Caco-2 (cell line): ENCODE measurements at regions of chr19 and their contacts with region 1.

Region 1: GRCh38 chr19:58305065-58305931 is at the start of gene ERVK3-1:
- DNase-seq: peak; percentile 94 to 95
- H3K4me3 ChIP-seq: peak within 1 kb of the TSS; percentile 68
- H3K4me3 Mint-ChIP-seq: peak within 1 kb of the TSS; percentile 93
- H3K27ac Mint-ChIP-seq: peak within 1 kb of the TSS; percentile 97
- H3K4me1 ChIP-seq: peaks cover 11% of the 10 kb centered on the region
- H3K4me1 Mint-ChIP-seq: peaks cover 8% of the 10 kb centered on the region
- H3K27me3 ChIP-seq: no peaks in the 10 kb centered on the region
- H3K27me3 Mint-ChIP-seq: no peaks in the 10 kb centered on the region
- CTCF ChIP-seq: no peak
- total RNA-seq, gene ERVK3-1: 61.3 and 66.1 TPM in 2 replicates

Region 2: DNA sequence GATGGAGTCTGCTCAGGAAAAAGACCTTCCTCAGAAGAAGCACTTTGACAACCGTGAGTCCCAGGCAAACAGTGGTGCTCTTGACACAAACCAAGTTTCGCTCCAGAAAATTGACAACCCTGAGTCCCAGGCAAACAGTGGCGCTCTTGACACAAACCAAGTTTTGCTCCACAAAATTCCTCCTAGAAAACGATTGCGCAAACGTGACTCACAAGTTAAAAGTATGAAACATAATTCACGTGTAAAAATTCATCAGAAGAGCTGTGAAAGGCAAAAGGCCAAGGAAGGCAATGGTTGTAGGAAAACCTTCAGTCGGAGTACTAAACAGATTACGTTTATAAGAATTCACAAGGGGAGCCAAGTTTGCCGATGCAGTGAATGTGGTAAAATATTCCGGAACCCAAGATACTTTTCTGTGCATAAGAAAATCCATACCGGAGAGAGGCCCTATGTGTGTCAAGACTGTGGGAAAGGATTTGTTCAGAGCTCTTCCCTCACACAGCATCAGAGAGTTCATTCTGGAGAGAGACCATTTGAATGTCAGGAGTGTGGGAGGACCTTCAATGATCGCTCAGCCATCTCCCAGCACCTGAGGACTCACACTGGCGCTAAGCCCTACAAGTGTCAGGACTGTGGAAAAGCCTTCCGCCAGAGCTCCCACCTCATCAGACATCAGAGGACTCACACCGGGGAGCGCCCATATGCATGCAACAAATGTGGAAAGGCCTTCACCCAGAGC is 92.8 kb before region 1 on chr19:
- CTCF ChIA-PET with region 1: no interaction called
- POLR2A ChIA-PET with region 1: no interaction called
- intact Hi-C with region 1: no loop called
- DNase-seq: no peak
- H3K4me3 ChIP-seq: no peak overlapping the region
- H3K4me3 Mint-ChIP-seq: no peak overlapping the region
- H3K27ac Mint-ChIP-seq: no peak overlapping the region
- H3K4me1 ChIP-seq: no peaks in the 10 kb centered on the region
- H3K4me1 Mint-ChIP-seq: no peaks in the 10 kb centered on the region
- H3K27me3 ChIP-seq: no peaks in the 10 kb centered on the region
- H3K27me3 Mint-ChIP-seq: no peaks in the 10 kb centered on the region
- CTCF ChIP-seq: no peak

Region 3: DNA sequence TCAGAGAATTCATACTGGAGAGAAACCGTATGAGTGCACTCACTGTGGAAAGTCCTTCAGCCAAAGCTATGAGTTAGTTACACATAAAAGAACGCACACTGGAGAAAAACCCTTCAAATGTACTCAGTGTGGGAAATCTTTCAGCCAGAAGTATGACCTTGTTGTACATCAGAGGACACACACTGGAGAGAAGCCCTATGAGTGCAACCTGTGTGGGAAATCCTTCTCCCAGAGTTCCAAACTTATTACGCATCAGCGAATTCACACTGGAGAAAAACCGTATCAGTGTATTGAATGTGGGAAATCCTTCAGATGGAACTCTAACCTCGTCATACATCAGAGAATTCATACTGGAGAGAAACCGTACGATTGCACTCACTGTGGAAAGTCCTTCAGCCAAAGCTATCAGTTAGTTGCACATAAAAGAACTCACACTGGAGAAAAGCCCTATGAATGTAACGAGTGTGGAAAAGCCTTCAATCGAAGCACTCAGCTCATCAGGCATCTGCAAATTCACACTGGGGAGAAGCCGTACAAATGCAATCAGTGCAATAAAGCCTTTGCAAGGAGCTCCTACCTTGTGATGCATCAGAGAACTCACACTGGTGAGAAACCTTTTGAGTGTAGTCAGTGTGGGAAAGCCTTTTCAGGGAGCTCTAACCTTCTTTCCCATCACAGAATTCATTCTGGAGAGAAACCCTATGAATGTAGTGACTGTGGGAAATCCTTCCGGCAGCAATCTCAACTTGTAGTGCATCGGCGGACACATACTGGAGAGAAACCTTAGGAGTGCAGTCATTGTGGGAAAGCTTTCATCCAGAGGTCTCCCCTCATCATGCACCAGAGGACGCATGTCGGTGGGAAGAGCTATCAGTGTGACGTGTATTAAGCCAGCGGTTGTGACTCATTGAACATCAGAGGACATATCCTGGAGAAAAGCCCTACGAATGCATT is 43.1 kb before region 1 on chr19:
- CTCF ChIA-PET with region 1: no interaction called
- POLR2A ChIA-PET with region 1: no interaction called
- intact Hi-C with region 1: no loop called
- DNase-seq: no peak
- H3K4me3 ChIP-seq: no peak overlapping the region
- H3K4me3 Mint-ChIP-seq: peak overlapping the region; percentile 11
- H3K27ac Mint-ChIP-seq: no peak overlapping the region
- H3K4me1 ChIP-seq: no peaks in the 10 kb centered on the region
- H3K4me1 Mint-ChIP-seq: no peaks in the 10 kb centered on the region
- H3K27me3 ChIP-seq: no peaks in the 10 kb centered on the region
- H3K27me3 Mint-ChIP-seq: no peaks in the 10 kb centered on the region
- CTCF ChIP-seq: no peak

Region 4: DNA sequence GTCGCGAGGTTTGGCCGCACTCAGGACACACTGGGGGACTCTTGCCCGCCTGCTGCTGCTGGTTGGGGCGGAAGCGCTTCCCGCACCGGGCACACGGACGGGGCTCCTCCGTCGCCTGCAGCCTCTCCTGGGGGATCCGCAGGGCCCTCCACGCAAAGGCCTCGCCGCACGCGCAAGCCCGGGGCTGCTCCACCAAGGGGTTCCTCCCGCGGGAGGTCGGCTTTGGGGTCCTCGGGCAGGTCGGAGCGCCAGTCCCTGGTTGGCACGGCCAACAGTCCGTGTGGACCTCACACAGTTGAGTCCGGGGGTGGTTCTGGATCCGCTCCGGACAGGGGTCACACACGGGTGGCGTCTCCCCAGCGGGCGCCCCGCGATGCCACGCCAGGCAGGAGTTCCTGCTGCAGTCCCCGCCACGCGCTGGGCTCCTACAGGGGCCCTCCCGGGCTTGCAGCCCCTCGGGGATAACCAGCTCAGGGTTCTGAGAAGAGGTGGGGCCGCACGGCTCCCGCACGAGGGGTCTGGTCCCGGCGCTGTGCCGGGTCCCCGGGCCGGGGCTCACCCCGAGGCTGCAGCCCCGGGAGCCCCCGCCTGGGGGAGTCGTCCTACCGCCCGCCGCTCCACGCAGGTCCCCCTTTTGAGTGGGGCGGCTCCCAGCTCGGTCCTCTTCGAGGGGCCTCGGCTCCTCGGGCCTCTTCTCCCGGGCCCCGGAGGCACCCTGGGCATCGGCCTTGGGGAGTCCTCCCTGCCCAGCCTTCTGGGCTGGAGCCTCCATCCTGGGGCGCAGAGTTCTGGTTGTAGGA is 63.5 kb after region 1 on chr19:
- CTCF ChIA-PET with region 1: no interaction called
- POLR2A ChIA-PET with region 1: no interaction called
- intact Hi-C with region 1: no loop called
- DNase-seq: no peak
- H3K4me3 ChIP-seq: no peak overlapping the region
- H3K4me3 Mint-ChIP-seq: no peak overlapping the region
- H3K27ac Mint-ChIP-seq: peak overlapping the region; percentile 66
- H3K4me1 ChIP-seq: no peaks in the 10 kb centered on the region
- H3K4me1 Mint-ChIP-seq: no peaks in the 10 kb centered on the region
- H3K27me3 ChIP-seq: no peaks in the 10 kb centered on the region
- H3K27me3 Mint-ChIP-seq: no peaks in the 10 kb centered on the region
- CTCF ChIP-seq: no peak

Region 5: GRCh38 chr19:58380722-58381466 is 75.6 kb after region 1 on chr19 and contains the start of gene ZNF837:
- CTCF ChIA-PET with region 1: no interaction called
- POLR2A ChIA-PET with region 1: interaction called, 3 read pairs
- intact Hi-C with region 1: loop called (anchors 1 kb)
- DNase-seq: peak; percentile 99 to 100
- H3K4me3 ChIP-seq: peak within 1 kb of the TSS; percentile 68
- H3K4me3 Mint-ChIP-seq: peak within 1 kb of the TSS; percentile 87
- H3K27ac Mint-ChIP-seq: peak within 1 kb of the TSS; percentile 85
- H3K4me1 ChIP-seq: peaks cover 18% of the 10 kb centered on the region
- H3K4me1 Mint-ChIP-seq: peaks cover 12% of the 10 kb centered on the region
- H3K27me3 ChIP-seq: no peaks in the 10 kb centered on the region
- H3K27me3 Mint-ChIP-seq: no peaks in the 10 kb centered on the region
- CTCF ChIP-seq: no peak
- total RNA-seq, gene ZNF837: 2.2 and 2.3 TPM in 2 replicates

Region 6: DNA sequence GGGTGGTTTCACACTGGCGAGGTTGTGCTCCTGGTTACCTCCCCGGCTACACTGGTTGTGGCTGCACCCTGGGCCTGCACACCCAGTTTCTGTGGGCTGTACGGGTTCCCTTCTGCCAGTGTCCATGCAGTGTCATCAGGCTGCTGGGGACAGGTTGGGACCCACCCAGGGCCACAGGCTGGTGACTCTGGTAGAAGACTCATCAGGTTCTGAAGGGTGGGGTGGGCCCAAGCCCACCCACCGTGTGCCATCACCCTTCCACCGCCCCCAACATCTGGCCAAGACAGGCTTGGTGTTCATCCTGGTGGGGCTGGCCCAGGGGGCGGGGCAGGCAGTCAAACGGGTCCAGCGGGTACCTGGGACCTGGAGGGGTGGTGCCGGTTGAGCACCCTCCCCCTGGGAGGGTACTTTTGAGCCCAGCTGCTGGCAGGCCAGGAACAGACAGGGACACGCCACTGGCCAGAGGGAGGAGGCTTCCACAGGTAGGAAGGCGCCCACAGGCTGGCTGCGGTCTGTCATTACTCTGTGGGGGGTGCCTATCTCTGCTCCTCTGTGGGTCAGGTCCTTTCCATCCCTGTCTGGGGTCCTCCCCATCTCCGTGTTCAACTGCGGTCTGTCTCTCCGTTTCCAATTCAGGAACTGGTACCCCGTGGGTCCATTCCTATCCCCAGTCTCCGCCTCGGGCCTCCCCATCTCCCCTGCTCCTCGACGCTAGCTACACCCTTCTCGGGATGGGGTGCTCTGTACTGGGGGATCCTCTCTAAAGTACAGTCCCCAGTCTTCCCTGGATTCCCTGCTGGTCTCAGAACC is 90.1 kb after region 1 on chr19 and contains the start of gene RNF225:
- CTCF ChIA-PET with region 1: no interaction called
- POLR2A ChIA-PET with region 1: no interaction called
- intact Hi-C with region 1: no loop called
- DNase-seq: peak; percentile 72 to 77
- H3K4me3 ChIP-seq: no peak within 1 kb of the TSS
- H3K4me3 Mint-ChIP-seq: no peak within 1 kb of the TSS
- H3K27ac Mint-ChIP-seq: peak within 1 kb of the TSS; percentile 76
- H3K4me1 ChIP-seq: peaks cover 10% of the 10 kb centered on the region
- H3K4me1 Mint-ChIP-seq: peaks cover 7% of the 10 kb centered on the region
- H3K27me3 ChIP-seq: no peaks in the 10 kb centered on the region
- H3K27me3 Mint-ChIP-seq: no peaks in the 10 kb centered on the region
- CTCF ChIP-seq: no peak
- total RNA-seq, gene RNF225: 0.73 and 1.3 TPM in 2 replicates